ENCODE measurements at regions of chr12 and their contacts with region 1.

Region 1: DNA sequence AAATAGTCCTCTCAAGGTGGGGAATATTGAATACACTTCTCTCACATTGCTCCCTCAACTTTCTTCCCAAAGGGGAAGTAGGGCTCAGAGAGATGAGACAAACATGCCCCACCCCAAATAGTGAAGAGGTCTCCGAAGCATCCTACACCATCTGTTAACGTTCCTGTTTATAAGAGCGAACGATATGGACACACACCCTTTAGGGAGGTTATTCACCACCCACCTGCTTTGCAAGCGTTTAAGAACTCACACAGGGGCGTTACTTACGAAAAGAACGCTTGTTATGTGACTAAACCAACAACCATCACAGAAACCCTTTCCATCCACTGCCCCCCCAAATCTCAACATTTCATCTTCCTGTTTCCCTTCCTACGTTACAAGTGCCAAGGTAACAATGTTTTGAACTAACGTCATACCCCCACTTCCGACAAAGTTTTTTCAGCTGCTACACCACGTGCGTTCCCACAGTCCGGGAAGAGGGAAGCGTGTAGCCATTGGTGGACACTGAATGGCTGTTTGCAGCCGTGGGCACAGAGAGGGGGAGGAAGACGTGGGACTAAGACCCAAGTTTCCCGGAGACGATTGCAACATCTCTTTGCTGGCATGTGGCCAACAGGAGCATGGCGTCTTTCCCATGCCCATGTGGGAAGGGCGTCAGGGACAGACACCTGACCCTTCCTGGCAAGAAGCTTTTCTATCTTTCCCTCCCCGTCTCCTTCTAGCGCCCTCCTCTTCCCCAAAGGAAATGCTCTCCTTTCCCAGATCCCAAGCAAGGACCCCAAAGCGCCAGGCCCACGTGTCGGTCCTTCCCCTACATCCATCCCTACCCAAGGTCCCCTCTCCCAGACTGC is 1.2 kb downstream of the YBX3 start:
- DNase-seq: peak; percentile 53
- ATAC-seq: peak; percentile 62
- H3K4me3 ChIP-seq: peak overlapping the region; percentile 90
- H3K27ac ChIP-seq: peak overlapping the region; percentile 73
- H3K4me1 ChIP-seq: 0 out of 2 replicates have a peak, but pooled peaks cover 3% of the 10 kb centered on the region
- H3K27me3 ChIP-seq: 0 out of 4 replicates have a peak, but pooled peaks cover 0 to 2% of the 10 kb centered on the region in 2 experiments
- CTCF ChIP-seq: no peak
- EP300 ChIP-seq: peak in 1 of 2 experiments; percentile 28; a peak in 1 of 4 replicates
- POLR2A ChIP-seq: peak; percentile 60; the same call in 1 of the 2 replicates
- RAD21 ChIP-seq: no peak

Region 2: GRCh38 chr12:10607885-10608458 is 113.9 kb before region 1 on chr12:
- CTCF ChIA-PET with region 1: interaction called, 5 read pairs
- POLR2A ChIA-PET with region 1: interaction called, 4 read pairs
- RAD21 ChIA-PET with region 1: no interaction called
- SMC1A ChIA-PET with region 1: no interaction called
- in situ Hi-C with region 1: no loop called
- intact Hi-C with region 1: loop called (anchors 10 kb)
- DNase-seq: no peak
- ATAC-seq: 0 out of 3 replicates have a peak, but pooled peaks have one; percentile 10
- H3K4me3 ChIP-seq: no peak overlapping the region
- H3K27ac ChIP-seq: no peak overlapping the region
- H3K4me1 ChIP-seq: no peaks in the 10 kb centered on the region
- H3K27me3 ChIP-seq: no peaks in the 10 kb centered on the region
- CTCF ChIP-seq: peak in 2 of 3 experiments; percentile 16 to 38; a peak in 2 of 6 replicates
- EP300 ChIP-seq: no peak
- POLR2A ChIP-seq: no peak
- RAD21 ChIP-seq: peak; percentile 14; the same call in 1 of the 2 replicates

Region 3: DNA sequence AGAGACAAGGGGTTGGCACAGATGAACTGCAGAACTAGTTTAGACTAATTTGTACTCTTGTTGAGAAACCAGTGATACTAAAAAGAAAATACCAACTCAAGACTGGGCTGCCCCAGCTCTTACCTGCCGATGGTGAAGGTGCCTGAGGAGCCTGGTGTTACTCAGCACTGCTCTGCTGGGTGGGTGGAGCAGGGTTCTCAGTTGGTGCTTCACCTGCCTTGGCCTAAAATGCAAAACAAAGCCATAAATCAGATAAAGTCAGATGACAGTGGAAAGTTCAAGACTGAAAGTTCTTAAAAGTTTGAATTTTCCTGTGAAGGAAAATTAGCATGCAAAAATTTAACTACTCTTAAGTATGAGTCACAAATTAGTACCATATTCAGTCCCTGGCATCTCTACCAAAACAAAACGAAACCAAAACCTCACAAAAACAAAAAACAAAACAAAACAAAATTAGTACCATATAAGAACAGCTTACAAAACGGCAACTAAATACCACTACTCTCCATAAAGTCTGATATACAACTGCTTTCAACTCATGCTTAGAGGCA is 20.7 kb before region 1 on chr12:
- CTCF ChIA-PET with region 1: interaction called, 10 read pairs
- POLR2A ChIA-PET with region 1: no interaction called
- RAD21 ChIA-PET with region 1: interaction called, 7 read pairs
- SMC1A ChIA-PET with region 1: interaction called, 18 read pairs
- in situ Hi-C with region 1: no loop called
- intact Hi-C with region 1: no loop called
- DNase-seq: no peak
- ATAC-seq: peak; percentile 68
- H3K4me3 ChIP-seq: no peak overlapping the region
- H3K27ac ChIP-seq: peak overlapping the region; percentile 14; the same call in 1 of the 2 replicates
- H3K4me1 ChIP-seq: peaks cover 9% of the 10 kb centered on the region; the same call in 1 of the 2 replicates
- H3K27me3 ChIP-seq: no peaks in the 10 kb centered on the region
- CTCF ChIP-seq: no peak
- EP300 ChIP-seq: no peak
- POLR2A ChIP-seq: no peak
- RAD21 ChIP-seq: no peak

Region 4: DNA sequence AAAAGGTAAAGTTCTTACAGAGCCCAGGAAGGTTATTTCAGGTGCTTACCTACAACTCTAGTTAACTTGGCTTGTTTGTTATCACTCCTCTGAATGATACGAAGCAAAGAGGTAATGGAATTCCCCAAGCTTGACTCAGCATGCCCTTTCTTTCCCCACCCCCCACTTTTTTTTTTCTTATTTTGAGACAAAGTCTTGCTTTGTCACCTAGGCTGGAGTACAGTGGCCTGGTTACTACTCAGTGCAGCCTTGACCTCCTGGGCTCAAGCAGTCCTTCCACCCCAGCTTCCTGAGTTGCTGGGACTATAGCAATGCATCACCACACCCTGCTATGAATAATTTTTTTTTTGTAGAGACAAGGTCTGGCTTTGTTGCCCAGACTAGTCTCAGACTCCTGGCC is 18.3 kb after region 1 on chr12:
- CTCF ChIA-PET with region 1: interaction called, 3 read pairs
- POLR2A ChIA-PET with region 1: interaction called, 3 read pairs
- RAD21 ChIA-PET with region 1: interaction called, 8 read pairs
- SMC1A ChIA-PET with region 1: interaction called, 12 read pairs
- in situ Hi-C with region 1: no loop called
- intact Hi-C with region 1: no loop called
- DNase-seq: no peak
- ATAC-seq: peak; percentile 83
- H3K4me3 ChIP-seq: no peak overlapping the region
- H3K27ac ChIP-seq: no peak overlapping the region
- H3K4me1 ChIP-seq: 0 out of 2 replicates have a peak, but pooled peaks cover 2% of the 10 kb centered on the region
- H3K27me3 ChIP-seq: no peaks in the 10 kb centered on the region
- CTCF ChIP-seq: no peak
- EP300 ChIP-seq: no peak
- POLR2A ChIP-seq: no peak
- RAD21 ChIP-seq: no peak